ENCODE measurements at regions of chr2 and their contacts with region 1.

Region 1: GRCh38 chr2:45794134-45794617 is 142.7 kb downstream of the PRKCE start:
- DNase-seq: no peak
- ATAC-seq: no peak
- H3K4me3 ChIP-seq: no peak overlapping the region
- H3K27ac ChIP-seq: no peak overlapping the region
- H3K4me1 ChIP-seq: no peaks in the 10 kb centered on the region
- CTCF ChIP-seq: no peak
- EP300 ChIP-seq: no peak
- POLR2A ChIP-seq: no peak
- RAD21 ChIP-seq: no peak

Region 2: DNA sequence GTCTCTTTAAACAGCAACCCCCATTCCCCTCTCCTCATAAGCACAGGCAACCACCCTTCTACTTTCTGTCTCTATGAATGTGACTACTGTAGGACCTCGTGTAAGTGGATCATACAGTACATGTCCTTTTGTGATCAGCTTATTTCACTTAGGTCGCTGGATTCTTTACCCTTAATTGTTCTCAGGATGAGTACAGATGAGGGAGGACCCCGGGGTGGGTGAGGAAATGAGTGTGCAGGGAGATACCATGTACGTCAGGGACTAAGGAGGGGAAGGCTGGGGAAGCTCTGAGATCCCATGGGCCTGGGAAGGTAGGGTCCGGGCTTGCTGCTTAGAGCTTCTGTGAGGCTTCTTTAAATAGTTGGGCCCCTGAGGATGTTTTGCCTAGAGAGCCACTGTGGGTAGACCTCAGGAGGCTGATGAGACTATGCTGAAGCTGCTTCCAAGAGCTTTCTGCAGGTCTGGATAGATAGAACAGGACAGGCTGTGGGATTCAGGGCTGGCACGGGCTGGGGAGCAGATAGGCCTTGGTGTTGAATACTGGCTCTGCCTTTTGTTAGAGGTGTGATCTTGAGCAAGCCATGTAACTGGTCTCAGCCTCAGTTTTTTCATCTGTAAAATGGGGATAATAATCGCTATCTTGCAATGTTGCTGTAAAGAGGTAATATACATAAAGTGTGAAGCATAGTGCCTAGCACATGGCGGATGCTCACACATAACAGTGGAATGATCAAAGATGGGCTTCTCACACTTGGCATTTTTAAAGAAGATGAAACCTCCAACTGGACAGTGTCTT is 12.6 kb after region 1 on chr2:
- CTCF ChIA-PET with region 1: interaction called, 10 read pairs
- POLR2A ChIA-PET with region 1: no interaction called
- DNase-seq: no peak
- ATAC-seq: no peak
- H3K4me3 ChIP-seq: no peak overlapping the region
- H3K27ac ChIP-seq: no peak overlapping the region
- H3K4me1 ChIP-seq: no peaks in the 10 kb centered on the region
- CTCF ChIP-seq: no peak
- EP300 ChIP-seq: no peak
- POLR2A ChIP-seq: no peak
- RAD21 ChIP-seq: no peak